Activated CD4-positive, alpha-beta T cell treated with anti-CD3 and anti-CD28 coated beads, Interleukin-2, amount 10 ng/mL, durations not matched to agents 7 days and 5 days (primary cell): ENCODE measurements at regions of chr14 and their contacts with region 1.

Region 1: GRCh38 chr14:44901696-44902095 is 60.1 kb downstream of the KLHL28 start:
- DNase-seq: no peak
- H3K4me3 Mint-ChIP-seq: no peak overlapping the region
- H3K27ac Mint-ChIP-seq: no peak overlapping the region
- H3K4me1 Mint-ChIP-seq: peaks cover 14% of the 10 kb centered on the region
- H3K27me3 Mint-ChIP-seq: peaks cover 2% of the 10 kb centered on the region

Region 2: DNA sequence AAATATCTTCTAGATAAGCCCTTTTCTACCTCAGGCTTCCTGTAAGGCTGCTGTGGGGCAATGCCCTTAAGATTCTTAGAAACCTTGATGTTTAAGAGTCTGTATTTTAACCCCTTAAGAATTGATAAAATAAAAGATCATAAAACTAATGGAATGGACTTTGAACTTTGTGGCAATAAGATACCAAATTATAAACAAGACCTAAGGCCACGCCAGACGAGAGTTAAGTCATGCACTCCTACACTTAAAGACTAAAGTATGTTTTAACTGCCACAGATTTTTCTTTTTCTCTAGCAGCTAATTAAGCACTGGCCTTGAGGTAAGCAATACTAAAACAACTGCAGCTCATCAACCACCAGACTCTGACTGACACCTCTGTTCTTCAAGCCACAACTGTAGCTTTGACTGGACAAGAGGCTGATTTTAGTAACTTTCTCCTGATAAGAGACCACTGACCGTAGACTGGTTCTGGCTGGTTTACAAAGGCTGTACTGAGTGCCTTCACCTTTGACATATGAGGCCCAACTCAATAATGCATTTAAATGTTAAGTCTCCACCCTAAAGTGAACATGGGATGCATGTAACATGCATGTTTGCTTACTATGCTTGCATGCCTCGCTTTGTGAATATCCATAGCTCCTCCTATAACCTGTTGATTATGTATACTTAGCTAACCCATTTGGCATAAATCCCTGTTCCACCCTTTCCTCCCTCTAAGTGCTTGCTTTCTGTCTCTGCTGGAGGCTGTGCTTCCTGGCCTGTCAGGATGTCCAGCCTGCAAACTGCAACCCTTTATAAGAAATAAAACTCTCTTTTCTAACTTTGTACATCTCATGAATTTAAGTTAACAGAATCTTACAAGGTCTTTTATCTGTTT is 11.9 kb before region 1 on chr14:
- CTCF ChIA-PET with region 1: no interaction called
- POLR2A ChIA-PET with region 1: no interaction called
- DNase-seq: no peak
- H3K4me3 Mint-ChIP-seq: no peak overlapping the region
- H3K27ac Mint-ChIP-seq: no peak overlapping the region
- H3K4me1 Mint-ChIP-seq: peaks cover 11% of the 10 kb centered on the region
- H3K27me3 Mint-ChIP-seq: no peaks in the 10 kb centered on the region

Region 3: GRCh38 chr14:45112889-45113781 is 211.4 kb after region 1 on chr14:
- CTCF ChIA-PET with region 1: interaction called, 3 read pairs
- POLR2A ChIA-PET with region 1: interaction called, 14 read pairs
- DNase-seq: no peak
- H3K4me3 Mint-ChIP-seq: no peak overlapping the region
- H3K27ac Mint-ChIP-seq: no peak overlapping the region
- H3K4me1 Mint-ChIP-seq: peaks cover 8% of the 10 kb centered on the region
- H3K27me3 Mint-ChIP-seq: no peaks in the 10 kb centered on the region